ENCODE measurements at regions of chr12 and their contacts with region 1.

Region 1: DNA sequence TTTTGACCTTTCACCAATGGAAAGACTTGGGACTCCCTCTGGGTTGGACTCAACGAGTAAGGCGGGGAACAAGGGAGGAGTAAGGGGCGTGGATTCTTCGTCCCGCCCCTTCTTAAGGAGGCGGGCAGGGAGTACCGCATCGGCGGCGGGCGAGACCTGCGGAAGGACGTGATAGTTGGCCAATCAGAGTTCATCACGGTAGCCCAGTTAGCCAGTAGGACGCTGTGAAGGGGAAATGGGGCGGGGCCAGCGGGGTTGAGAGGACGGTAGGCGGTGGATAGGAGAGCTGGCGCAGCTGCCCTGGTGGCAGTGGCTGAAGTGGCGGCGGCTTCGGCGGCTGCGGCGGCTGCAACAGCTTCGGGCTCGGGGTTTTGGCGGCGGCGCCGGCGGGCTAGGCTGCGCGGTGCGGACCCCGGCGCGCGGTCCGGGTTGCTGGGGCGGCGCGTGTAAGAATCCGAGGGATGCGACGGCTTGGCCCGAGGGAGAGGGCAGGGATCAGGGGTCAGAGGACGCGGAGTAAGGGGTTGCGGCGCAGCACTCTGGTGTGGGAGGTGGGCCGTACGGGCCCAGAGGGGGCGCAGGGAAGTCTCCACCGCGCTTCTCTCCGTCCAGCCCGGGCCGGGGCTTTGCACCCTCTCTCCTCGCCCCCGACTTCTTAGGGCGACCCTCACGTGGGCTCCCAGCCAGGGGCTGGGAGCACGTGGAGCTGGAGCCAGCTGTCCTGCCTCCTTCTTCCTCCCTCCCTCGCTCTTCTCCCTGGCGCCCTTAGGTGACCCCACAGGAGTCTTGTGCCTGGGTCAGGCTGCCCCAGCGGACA is at the start of gene TPCN1:
- DNase-seq: peak; percentile 100
- H3K4me3 Mint-ChIP-seq: peak within 1 kb of the TSS; percentile 96
- H3K27ac Mint-ChIP-seq: peak within 1 kb of the TSS; percentile 92
- H3K4me1 Mint-ChIP-seq: peaks cover 40% of the 10 kb centered on the region
- H3K27me3 Mint-ChIP-seq: no peaks in the 10 kb centered on the region
- total RNA-seq, gene TPCN1: 47.3 to 49.2 TPM

Region 2: GRCh38 chr12:113208041-113208934 is 13.1 kb before region 1 on chr12:
- CTCF ChIA-PET with region 1: interaction called, 5 read pairs
- intact Hi-C with region 1: loop called (anchors 1 kb)
- DNase-seq: peak; percentile 89
- H3K4me3 Mint-ChIP-seq: peak overlapping the region; percentile 34
- H3K27ac Mint-ChIP-seq: peak overlapping the region; percentile 95
- H3K4me1 Mint-ChIP-seq: peaks cover 41% of the 10 kb centered on the region
- H3K27me3 Mint-ChIP-seq: no peaks in the 10 kb centered on the region

Region 3: GRCh38 chr12:113232840-113233585 is 11.6 kb after region 1 on chr12:
- CTCF ChIA-PET with region 1: interaction called, 13 read pairs
- intact Hi-C with region 1: loop called (anchors 1 kb)
- DNase-seq: peak; percentile 83
- H3K4me3 Mint-ChIP-seq: peak overlapping the region; percentile 66
- H3K27ac Mint-ChIP-seq: peak overlapping the region; percentile 88
- H3K4me1 Mint-ChIP-seq: peaks cover 70% of the 10 kb centered on the region
- H3K27me3 Mint-ChIP-seq: no peaks in the 10 kb centered on the region

Region 4: GRCh38 chr12:113261847-113262470 is 40.6 kb after region 1 on chr12:
- CTCF ChIA-PET with region 1: interaction called, 3 read pairs
- intact Hi-C with region 1: loop called (anchors 5 kb)
- DNase-seq: peak; percentile 79
- H3K4me3 Mint-ChIP-seq: peak overlapping the region; percentile 18
- H3K27ac Mint-ChIP-seq: peak overlapping the region; percentile 79
- H3K4me1 Mint-ChIP-seq: peaks cover 53% of the 10 kb centered on the region
- H3K27me3 Mint-ChIP-seq: no peaks in the 10 kb centered on the region

Region 5: GRCh38 chr12:113334786-113335540 is 113.6 kb after region 1 on chr12 and contains the start of gene SLC8B1:
- CTCF ChIA-PET with region 1: no interaction called
- intact Hi-C with region 1: loop called (anchors 2 kb)
- DNase-seq: peak; percentile 87
- H3K4me3 Mint-ChIP-seq: peak within 1 kb of the TSS; percentile 96
- H3K27ac Mint-ChIP-seq: peak within 1 kb of the TSS; percentile 84
- H3K4me1 Mint-ChIP-seq: peaks cover 34% of the 10 kb centered on the region
- H3K27me3 Mint-ChIP-seq: no peaks in the 10 kb centered on the region
- total RNA-seq, gene SLC8B1: 20.2 to 20.4 TPM

Region 6: DNA sequence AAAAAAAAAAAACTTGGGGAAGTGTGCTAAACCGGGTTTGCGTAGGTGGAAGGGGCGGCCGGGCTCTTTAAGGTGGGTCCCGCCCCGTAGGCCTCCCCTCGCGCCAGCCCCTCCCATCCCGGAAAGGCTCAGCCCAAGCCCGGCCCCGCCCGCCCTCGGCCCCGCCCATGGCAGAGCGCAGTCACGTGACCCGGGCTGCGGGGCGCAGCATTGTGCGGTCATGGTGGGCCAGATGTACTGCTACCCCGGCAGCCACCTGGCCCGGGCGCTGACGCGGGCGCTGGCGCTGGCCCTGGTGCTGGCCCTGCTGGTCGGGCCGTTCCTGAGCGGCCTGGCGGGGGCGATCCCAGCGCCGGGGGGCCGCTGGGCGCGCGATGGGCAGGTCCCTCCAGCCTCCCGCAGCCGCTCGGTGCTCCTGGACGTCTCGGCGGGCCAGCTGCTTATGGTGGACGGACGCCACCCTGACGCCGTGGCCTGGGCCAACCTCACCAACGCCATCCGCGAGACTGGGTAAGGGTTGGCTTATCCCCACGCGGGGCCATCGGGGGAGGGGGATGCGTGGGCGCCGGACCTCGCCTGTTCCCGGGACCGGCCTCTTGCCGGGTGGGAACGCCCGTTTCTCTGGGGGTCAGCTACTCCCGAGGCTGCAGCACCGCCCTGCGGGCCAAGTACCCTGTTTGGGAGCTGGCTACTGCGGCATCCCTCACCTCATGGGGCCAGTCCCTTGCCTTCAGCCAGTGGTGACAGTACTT is 137.2 kb after region 1 on chr12 and contains the start of gene PLBD2:
- CTCF ChIA-PET with region 1: no interaction called
- intact Hi-C with region 1: loop called (anchors 1 kb)
- DNase-seq: peak; percentile 96
- H3K4me3 Mint-ChIP-seq: peak within 1 kb of the TSS; percentile 84
- H3K27ac Mint-ChIP-seq: peak within 1 kb of the TSS; percentile 88
- H3K4me1 Mint-ChIP-seq: peaks cover 17% of the 10 kb centered on the region
- H3K27me3 Mint-ChIP-seq: no peaks in the 10 kb centered on the region
- total RNA-seq, gene PLBD2: 13.9 to 14.1 TPM

Region 7: DNA sequence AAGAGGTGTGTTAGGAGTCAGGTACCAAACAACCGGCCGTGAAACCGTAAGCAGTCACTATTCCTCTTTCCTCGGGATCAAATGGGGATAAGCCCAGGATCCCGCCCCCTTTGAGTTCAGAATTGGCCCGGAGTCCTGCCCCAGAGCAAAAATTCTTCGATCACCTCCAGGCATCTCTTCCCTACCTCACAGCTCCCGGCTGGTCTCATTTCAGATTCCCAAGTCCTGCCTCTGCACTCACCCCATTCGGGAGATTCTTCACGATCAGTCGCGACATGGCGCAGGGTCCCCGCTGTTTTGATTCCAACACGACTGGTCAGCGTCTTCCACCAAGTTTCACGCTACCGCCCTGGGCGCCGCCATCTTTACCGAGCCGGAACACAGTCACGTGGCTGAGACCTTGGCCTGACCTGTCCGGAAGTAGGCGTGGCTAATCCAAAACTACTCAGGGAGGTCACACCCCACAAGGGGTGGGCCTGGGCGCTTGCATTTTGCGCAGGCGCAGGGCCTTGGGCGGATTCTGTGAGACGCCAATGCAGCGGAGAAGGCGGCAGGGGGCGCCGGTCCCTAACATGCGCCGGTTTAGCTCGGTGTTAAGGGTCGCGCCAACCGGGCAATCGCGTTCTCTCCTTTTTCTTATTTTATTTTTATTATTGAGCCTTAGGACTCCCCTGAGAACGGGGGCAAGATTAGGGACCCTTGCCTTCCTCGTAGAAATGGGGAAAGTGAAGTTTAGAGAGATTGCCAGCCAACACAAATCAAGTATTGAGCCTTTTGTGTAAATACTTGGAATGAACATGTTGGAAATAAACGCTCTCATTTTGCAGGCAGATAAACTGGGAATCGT is 744.8 kb after region 1 on chr12 and contains the start of gene RBM19:
- CTCF ChIA-PET with region 1: no interaction called
- intact Hi-C with region 1: loop called (anchors 5 kb)
- DNase-seq: peak; percentile 98
- H3K4me3 Mint-ChIP-seq: peak within 1 kb of the TSS; percentile 100
- H3K27ac Mint-ChIP-seq: peak within 1 kb of the TSS; percentile 91
- H3K4me1 Mint-ChIP-seq: peaks cover 52% of the 10 kb centered on the region
- H3K27me3 Mint-ChIP-seq: no peaks in the 10 kb centered on the region
- total RNA-seq, gene RBM19: 89.0 to 96.2 TPM